ENCODE measurements at regions of chr2 and their contacts with region 1.

Region 1: GRCh38 chr2:8681786-8682692 is at the start of gene ID2:
- DNase-seq: peak; percentile 99 to 100
- ATAC-seq: peak; percentile 69 to 90 (median 86)
- H3K4me3 ChIP-seq: peak within 1 kb of the TSS; percentile 67 to 96 (median 80)
- H3K27ac ChIP-seq: peak within 1 kb of the TSS; percentile 93 to 100 (median 99)
- H3K4me1 ChIP-seq: peaks cover 0 to 53% (median 32%) of the 10 kb centered on the region in 9 donors
- H3K27me3 ChIP-seq: peaks cover 0 to 12% (median 0%) of the 10 kb centered on the region in 7 donors
- CTCF ChIP-seq: no peak
- total RNA-seq, gene ID2: 20.8 to 49.7 (median 27.2) TPM

Region 2: GRCh38 chr2:7203055-7203467 is 1479.0 kb before region 1 on chr2:
- intact Hi-C with region 1: loop called in 9 of 10 experiments (anchors 2 to 10 kb)
- DNase-seq: peak in 1 of 2 donors; percentile 38
- ATAC-seq: peak in 5 of 8 donors; percentile 34 to 64 (median 51)
- H3K4me3 ChIP-seq: no peak overlapping the region
- H3K27ac ChIP-seq: no peak overlapping the region
- H3K4me1 ChIP-seq: no peaks in the 10 kb centered on the region
- H3K27me3 ChIP-seq: no peaks in the 10 kb centered on the region
- CTCF ChIP-seq: peak; percentile 71 to 96 (median 89)

Region 3: GRCh38 chr2:8004250-8004681 is 677.8 kb before region 1 on chr2:
- intact Hi-C with region 1: loop called in 5 of 10 experiments (anchors 5 to 10 kb)
- DNase-seq: peak in 1 of 2 donors; percentile 26
- ATAC-seq: peak; percentile 70 to 88 (median 74)
- H3K4me3 ChIP-seq: peak overlapping the region in 1 of 10 donors; percentile 3
- H3K27ac ChIP-seq: peak overlapping the region; percentile 35 to 85 (median 75)
- H3K4me1 ChIP-seq: peaks cover 3 to 30% (median 22%) of the 10 kb centered on the region in 9 donors
- H3K27me3 ChIP-seq: no peaks in the 10 kb centered on the region
- CTCF ChIP-seq: no peak

Region 4: GRCh38 chr2:8229546-8229986 is 452.5 kb before region 1 on chr2:
- intact Hi-C with region 1: loop called in 6 of 10 experiments (anchors 5 to 10 kb)
- DNase-seq: peak; percentile 39 to 51
- ATAC-seq: peak; percentile 45 to 86 (median 64)
- H3K4me3 ChIP-seq: no peak overlapping the region
- H3K27ac ChIP-seq: peak overlapping the region in 2 of 10 donors; percentile 2 to 18
- H3K4me1 ChIP-seq: peaks cover 0 to 30% (median 23%) of the 10 kb centered on the region in 9 donors
- H3K27me3 ChIP-seq: no peaks in the 10 kb centered on the region
- CTCF ChIP-seq: no peak

Region 5: DNA sequence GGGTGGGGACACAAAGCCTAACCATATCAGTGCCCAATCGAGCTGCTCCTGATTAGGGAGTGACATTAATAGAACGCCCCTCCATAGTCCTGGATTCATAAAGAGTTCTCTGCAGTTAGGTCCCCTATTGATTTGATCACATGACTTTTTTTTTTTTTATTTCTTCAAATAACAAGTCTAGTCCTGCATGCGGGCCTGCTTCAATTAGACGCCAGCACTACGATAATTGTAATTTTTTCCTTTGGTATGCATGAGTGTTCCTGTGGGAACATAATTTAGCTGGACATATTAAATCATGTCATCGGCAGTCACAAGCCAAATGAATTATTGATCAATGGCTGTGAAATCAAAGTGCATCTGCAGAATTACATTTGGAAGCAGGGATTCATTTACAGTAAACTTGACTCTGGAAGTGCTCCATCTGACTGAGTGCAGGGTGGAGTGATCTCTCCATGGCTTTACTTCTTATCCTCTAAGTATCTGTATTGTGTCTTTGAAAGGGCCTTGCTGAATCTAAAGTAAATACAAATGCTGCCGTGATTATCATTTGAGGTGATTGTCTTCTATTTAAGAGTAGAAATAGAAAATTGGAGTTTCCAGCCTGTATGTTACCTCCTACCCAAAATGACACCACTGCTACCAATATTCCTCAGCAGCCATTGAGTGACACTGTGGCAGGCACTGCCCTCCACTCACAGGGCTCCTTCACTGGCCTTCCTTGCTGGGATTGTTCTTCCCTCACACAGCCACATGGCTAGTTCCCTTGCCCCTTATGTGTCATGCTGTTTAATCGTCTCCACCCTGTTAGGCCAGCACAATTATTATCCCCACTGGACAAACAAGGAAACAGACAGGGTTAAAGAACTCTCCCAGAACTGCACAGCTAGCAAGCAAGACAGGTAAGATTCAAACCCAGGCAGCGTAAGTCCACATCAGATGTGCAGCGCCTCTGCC is 337.6 kb before region 1 on chr2:
- intact Hi-C with region 1: no loop called
- DNase-seq: no peak
- ATAC-seq: no peak
- H3K4me3 ChIP-seq: no peak overlapping the region
- H3K27ac ChIP-seq: no peak overlapping the region
- H3K4me1 ChIP-seq: no peaks in the 10 kb centered on the region
- H3K27me3 ChIP-seq: no peaks in the 10 kb centered on the region
- CTCF ChIP-seq: no peak

Region 6: GRCh38 chr2:8438476-8438875 is 243.6 kb before region 1 on chr2:
- intact Hi-C with region 1: loop called in 1 of 10 experiments (anchors 5 kb)
- DNase-seq: no peak
- ATAC-seq: peak in 6 of 8 donors; percentile 21 to 39 (median 26)
- H3K4me3 ChIP-seq: no peak overlapping the region
- H3K27ac ChIP-seq: peak overlapping the region in 7 of 10 donors; percentile 3 to 70 (median 64)
- H3K4me1 ChIP-seq: peaks cover 2 to 42% (median 12%) of the 10 kb centered on the region in 9 donors
- H3K27me3 ChIP-seq: no peaks in the 10 kb centered on the region
- CTCF ChIP-seq: no peak

Region 7: DNA sequence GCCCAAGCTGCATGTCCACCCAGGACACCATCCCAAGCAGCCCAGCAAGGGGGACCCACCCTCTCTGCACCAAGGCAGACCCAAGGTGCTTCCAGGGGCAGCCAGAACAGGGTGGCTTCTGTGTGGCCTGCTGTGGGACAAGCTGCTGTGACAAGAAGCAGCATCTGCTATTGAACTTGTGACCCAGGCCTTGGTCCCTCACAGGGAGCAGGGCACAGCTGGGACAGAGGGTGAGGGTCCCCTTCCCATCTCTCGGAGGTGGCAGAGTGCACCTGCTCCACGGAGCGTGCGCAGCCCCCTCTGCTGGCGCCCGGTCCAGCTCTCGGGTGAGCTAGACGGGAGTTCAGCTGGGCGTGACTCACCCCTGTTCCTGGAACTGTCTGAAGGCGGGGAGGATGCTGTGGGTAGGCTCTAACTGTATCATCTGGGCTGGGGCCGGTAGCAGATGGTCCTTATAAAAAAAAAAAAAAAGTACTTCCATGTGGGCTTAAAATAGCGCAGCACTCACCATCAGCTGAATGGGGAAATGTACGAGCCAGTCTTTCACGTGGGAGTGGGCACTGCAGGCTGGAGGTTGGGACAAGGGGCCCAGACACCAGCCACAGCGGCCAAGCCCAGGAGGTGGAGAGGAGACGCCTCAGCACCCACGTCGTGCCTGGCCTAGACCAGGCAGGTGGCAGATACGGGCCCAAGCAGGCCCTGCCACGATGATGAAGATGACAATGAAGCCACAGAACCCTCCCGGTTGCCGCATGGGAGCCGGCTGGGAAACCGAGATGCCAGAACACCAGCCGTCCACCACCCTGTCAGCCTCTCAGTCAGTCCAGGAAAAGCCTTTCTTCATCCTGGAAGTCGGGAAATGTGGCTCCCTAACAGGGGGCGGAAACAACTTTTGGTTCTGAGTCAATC is 137.0 kb before region 1 on chr2:
- intact Hi-C with region 1: loop called in 3 of 10 experiments (anchors 5 to 10 kb)
- DNase-seq: peak; percentile 63 to 73
- ATAC-seq: peak; percentile 64 to 91 (median 84)
- H3K4me3 ChIP-seq: no peak overlapping the region
- H3K27ac ChIP-seq: peak overlapping the region in 5 of 10 donors; percentile 36 to 91 (median 52)
- H3K4me1 ChIP-seq: peaks cover 0 to 71% (median 35%) of the 10 kb centered on the region in 9 donors
- H3K27me3 ChIP-seq: no peaks in the 10 kb centered on the region
- CTCF ChIP-seq: peak in 8 of 9 donors; percentile 18 to 64 (median 50)

Region 8: DNA sequence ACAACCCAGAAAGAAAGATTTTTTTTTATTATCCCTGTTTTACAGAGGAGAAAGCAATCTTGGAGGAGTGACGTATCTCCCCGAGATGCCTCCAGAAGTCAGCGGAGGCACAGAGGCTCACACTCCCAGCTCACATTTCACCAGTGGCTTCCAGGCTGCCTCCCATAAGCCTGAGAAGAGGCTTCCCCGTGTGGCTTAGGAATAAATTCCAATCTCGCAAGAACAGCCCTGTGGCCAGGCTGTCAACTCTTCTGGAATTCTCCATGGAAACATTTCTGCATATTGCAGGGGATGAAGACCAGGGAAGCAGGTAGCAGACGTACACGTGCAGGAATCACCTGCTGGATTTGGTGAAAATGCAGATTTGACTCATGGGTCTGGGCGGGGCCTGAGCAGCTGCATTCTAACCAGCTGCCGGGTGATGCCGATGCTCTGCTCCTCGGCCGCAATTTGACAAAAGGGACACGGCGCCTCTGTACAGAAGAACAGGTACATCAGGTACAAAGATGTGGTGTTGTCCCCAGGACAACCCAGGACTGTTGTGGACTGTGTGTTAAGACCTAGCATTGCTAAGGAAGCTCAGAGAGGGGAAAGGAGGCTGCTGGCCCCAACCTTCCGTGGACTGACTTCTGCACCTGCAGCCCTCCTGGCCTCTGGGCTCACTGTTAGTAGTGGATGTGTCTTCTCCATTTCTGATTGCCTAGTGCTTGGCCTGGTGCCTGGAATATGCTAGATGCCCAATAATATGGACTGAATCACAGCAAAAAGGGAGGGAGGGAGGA is 114.4 kb before region 1 on chr2:
- intact Hi-C with region 1: no loop called
- DNase-seq: no peak
- ATAC-seq: peak in 1 of 8 donors; percentile 10
- H3K4me3 ChIP-seq: no peak overlapping the region
- H3K27ac ChIP-seq: no peak overlapping the region
- H3K4me1 ChIP-seq: peaks cover 0 to 7% (median 0%) of the 10 kb centered on the region in 9 donors
- H3K27me3 ChIP-seq: no peaks in the 10 kb centered on the region
- CTCF ChIP-seq: no peak